Activated T-helper 1 cell treated with anti-CD3 and anti-CD28 coated beads, Interleukin-12 subunit alpha, Interleukin-12 subunit beta, Interleukin-2, Interleukin-4 antibody, amounts not matched to agents 30 ng/mL and 10 ng/mL and 1 ng/mL, durations not matched to agents 14 hours and 24 hours and 36 hours (primary cell): ENCODE measurements at regions of chr7 and their contacts with region 1.

Region 1: GRCh38 chr7:92833024-92833765 is 3.2 kb downstream of the CDK6 start:
- DNase-seq: peak; percentile 87
- H3K4me3 Mint-ChIP-seq: peak overlapping the region; percentile 97
- H3K27ac Mint-ChIP-seq: peak overlapping the region; percentile 97
- H3K4me1 Mint-ChIP-seq: peaks cover 54% of the 10 kb centered on the region
- H3K27me3 Mint-ChIP-seq: peaks cover 5% of the 10 kb centered on the region

Region 2: DNA sequence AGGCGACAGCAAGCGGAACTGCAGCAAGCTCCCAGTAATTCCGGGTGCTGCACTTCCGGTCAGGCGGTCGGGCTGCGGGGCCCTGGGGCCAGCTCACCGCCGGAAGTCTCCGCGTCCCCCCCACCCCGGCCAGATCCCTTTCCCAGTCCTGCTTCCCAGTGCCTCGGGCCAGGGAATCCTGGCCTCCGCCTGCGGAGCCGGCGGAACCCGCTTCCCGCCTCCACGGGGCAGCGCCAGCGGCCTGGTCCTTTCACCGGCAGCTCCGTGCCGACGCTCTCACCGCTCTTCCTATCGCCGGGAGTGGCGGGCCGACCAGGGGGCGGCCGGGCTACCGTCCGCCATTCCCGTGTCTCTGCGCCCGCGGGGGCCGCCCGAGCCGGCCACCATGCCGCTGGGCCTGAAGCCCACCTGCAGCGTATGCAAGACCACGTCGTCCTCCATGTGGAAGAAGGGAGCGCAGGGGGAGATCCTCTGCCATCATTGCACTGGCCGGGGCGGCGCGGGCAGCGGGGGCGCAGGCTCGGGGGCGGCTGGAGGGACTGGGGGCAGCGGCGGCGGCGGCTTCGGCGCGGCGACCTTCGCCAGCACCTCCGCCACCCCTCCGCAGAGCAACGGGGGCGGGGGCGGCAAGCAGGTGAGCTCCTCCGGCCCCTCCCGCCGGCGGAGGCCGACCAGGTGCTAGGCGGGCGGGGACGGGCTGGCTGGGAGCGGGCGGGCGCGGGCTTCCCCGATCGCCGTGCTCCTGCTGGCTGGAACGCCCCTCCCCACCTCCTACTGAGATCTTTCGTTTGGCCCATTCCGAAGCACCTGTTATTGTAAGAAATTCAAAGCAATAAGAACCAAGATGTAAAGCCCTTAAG is 385.6 kb before region 1 on chr7 and contains the start of gene GATAD1:
- intact Hi-C with region 1: loop called (anchors 5 kb)
- DNase-seq: peak; percentile 79
- H3K4me3 Mint-ChIP-seq: peak within 1 kb of the TSS; percentile 89
- H3K27ac Mint-ChIP-seq: peak within 1 kb of the TSS; percentile 92
- H3K4me1 Mint-ChIP-seq: peaks cover 15% of the 10 kb centered on the region
- H3K27me3 Mint-ChIP-seq: no peaks in the 10 kb centered on the region
- total RNA-seq, gene GATAD1: 18.4 and 18.8 TPM in 2 replicates

Region 3: GRCh38 chr7:92682903-92683539 is 150.2 kb before region 1 on chr7:
- intact Hi-C with region 1: loop called (anchors 1 kb)
- DNase-seq: no peak
- H3K4me3 Mint-ChIP-seq: peak overlapping the region; percentile 57
- H3K27ac Mint-ChIP-seq: peak overlapping the region; percentile 95
- H3K4me1 Mint-ChIP-seq: peaks cover 90% of the 10 kb centered on the region
- H3K27me3 Mint-ChIP-seq: no peaks in the 10 kb centered on the region

Region 4: GRCh38 chr7:92768501-92769393 is 64.4 kb before region 1 on chr7:
- intact Hi-C with region 1: loop called (anchors 1 kb)
- DNase-seq: peak; percentile 20
- H3K4me3 Mint-ChIP-seq: peak overlapping the region; percentile 47
- H3K27ac Mint-ChIP-seq: peak overlapping the region; percentile 85
- H3K4me1 Mint-ChIP-seq: peaks cover 83% of the 10 kb centered on the region
- H3K27me3 Mint-ChIP-seq: no peaks in the 10 kb centered on the region

Region 5: GRCh38 chr7:92790992-92791391 is 42.2 kb before region 1 on chr7:
- intact Hi-C with region 1: no loop called
- DNase-seq: no peak
- H3K4me3 Mint-ChIP-seq: no peak overlapping the region
- H3K27ac Mint-ChIP-seq: no peak overlapping the region
- H3K4me1 Mint-ChIP-seq: peaks cover 71% of the 10 kb centered on the region
- H3K27me3 Mint-ChIP-seq: no peaks in the 10 kb centered on the region

Region 6: DNA sequence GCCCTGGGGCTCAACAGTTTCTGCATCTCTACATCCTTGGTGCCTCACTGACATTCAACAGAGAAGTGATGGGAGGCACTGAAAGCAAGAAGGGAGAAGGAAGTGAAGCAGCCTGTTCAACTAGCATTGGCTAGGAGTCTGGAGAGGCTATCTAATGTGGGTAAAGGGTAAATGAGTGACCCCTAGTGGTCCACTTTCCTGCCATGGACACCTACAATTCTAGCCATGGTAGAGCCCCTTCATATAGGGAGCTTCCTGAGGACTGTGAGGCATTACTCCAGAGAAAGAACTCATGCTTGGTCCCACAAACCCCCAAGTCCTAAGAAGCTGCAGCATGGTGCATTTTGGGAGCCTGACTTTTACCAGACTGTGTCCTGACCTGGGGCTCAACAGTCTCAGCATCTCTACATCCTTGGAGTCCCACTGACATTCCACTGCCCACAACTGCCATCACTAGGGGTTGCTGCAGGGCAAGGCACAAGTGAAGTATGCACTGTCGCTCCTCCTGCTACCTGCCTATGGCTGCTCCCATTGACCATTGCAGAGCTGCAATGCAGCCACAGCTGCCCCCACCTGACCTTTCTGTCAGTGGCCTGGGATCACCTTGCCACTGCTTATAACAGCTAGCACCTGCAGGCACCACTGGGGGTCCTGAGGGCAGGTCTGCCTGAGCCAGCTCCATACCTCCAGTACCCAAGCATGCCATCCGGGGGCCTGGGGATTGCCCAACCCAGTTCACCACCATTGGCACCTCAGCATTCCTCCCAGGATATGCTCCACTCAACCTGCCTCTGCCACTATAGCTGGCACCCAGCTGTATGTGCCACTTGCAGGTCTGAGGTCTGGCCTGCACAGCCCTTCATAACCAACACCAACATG is 47.3 kb after region 1 on chr7:
- intact Hi-C with region 1: loop called (anchors 1 kb)
- DNase-seq: no peak
- H3K4me3 Mint-ChIP-seq: no peak overlapping the region
- H3K27ac Mint-ChIP-seq: no peak overlapping the region
- H3K4me1 Mint-ChIP-seq: peaks cover 67% of the 10 kb centered on the region
- H3K27me3 Mint-ChIP-seq: no peaks in the 10 kb centered on the region

Region 7: DNA sequence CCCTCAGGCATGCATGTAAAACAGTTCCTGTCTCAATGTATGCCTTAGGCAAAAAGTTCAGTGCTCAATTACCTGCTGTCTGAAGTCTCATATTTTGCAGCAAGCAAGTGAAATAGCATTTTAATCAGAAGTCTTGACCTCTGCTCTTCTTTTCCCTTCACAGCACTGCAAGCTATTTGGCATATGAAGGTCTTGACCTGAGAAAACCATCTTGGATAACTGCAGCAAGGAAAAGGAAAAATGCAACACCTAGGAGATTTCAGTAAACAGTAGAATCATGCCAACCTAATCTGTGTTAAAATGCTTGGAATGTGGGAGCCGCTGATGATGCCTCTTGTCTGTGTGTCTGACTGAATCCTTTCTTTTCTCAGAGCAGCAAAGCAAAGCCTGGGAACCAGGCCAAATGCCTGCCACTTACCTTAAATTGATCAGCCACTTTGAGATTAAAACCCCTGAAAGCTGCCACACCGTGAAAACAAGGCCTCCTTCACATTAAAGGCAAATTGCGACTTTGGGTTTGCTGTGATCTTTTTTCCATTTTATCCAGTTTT is 83.6 kb after region 1 on chr7:
- intact Hi-C with region 1: no loop called
- DNase-seq: no peak
- H3K4me3 Mint-ChIP-seq: no peak overlapping the region
- H3K27ac Mint-ChIP-seq: no peak overlapping the region
- H3K4me1 Mint-ChIP-seq: no peaks in the 10 kb centered on the region
- H3K27me3 Mint-ChIP-seq: no peaks in the 10 kb centered on the region

Region 8: DNA sequence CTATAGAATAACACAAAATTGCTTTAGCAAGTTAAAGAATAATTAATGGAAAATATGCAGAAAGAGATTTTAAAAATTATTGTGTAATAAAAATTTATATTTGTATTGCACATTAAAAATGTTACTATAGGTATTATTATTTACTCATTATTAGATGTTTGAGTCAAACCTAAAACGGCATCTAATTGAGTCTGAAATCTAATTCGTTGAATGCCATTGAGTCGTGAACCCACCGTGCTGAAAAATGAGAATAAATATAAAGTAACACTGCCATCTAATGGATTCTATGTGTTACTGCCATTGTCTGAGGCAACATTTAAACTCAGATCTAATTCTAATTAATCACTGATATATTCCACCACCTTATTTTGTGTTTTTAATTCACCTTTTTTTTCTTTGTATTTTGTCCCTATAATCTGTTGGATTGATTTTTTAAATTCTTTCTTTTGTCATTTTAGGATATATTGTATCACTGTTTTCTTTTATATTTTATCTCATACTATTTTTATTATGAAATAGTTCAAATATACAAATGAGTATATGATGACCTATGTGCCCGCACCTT is 222.4 kb after region 1 on chr7:
- intact Hi-C with region 1: loop called (anchors 1 kb)
- DNase-seq: no peak
- H3K4me3 Mint-ChIP-seq: no peak overlapping the region
- H3K27ac Mint-ChIP-seq: no peak overlapping the region
- H3K4me1 Mint-ChIP-seq: peaks cover 19% of the 10 kb centered on the region
- H3K27me3 Mint-ChIP-seq: peaks cover 6% of the 10 kb centered on the region